IMR-90 (cell line): ENCODE measurements at regions of chr3 and their contacts with region 1.

Region 1: DNA sequence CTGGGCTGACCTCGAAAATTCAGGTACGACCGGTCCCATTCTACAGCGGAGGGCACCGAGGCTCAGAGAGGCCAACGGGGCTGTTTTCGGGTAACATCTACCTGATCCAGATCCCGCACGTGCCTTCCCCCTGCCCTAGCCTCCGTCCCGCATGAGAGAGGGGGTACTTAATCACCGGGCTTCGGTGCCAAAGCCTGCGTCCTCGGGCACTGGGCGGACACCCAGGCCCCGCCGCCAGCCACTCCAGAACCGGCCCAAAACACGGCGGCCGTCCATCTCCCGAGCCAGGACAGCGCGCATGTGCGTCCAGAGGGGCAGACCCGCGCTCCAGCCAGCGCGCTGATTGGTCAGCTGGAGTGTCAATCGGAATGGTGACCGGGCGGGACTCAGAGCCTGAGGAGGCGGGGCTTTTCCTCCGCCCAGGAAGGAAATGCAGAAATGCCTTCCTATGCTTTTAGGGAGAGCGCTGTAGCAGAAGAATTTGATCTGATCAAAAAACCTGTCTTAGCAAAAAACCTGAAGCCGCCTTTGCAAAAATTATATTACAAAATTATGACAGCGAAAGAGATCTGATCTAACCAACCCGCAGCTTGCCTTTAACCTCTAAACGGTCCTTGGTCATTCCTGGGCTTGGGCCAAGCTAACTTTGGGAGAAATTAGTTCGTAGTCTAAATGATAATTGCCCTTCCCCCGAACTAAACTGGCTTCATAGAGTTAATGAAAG is at the start of gene RPUSD3:
- DNase-seq: peak; percentile 93
- ATAC-seq: peak; percentile 99
- H3K4me3 ChIP-seq: peak within 1 kb of the TSS; percentile 71
- H3K27ac ChIP-seq: peak within 1 kb of the TSS; percentile 79
- H3K4me1 ChIP-seq: no peaks in the 10 kb centered on the region
- H3K27me3 ChIP-seq: no peaks in the 10 kb centered on the region
- CTCF ChIP-seq: no peak
- POLR2A ChIP-seq: no peak
- RAD21 ChIP-seq: no peak
- total RNA-seq, gene RPUSD3: 30.3 and 30.8 TPM in 2 replicates

Region 2: DNA sequence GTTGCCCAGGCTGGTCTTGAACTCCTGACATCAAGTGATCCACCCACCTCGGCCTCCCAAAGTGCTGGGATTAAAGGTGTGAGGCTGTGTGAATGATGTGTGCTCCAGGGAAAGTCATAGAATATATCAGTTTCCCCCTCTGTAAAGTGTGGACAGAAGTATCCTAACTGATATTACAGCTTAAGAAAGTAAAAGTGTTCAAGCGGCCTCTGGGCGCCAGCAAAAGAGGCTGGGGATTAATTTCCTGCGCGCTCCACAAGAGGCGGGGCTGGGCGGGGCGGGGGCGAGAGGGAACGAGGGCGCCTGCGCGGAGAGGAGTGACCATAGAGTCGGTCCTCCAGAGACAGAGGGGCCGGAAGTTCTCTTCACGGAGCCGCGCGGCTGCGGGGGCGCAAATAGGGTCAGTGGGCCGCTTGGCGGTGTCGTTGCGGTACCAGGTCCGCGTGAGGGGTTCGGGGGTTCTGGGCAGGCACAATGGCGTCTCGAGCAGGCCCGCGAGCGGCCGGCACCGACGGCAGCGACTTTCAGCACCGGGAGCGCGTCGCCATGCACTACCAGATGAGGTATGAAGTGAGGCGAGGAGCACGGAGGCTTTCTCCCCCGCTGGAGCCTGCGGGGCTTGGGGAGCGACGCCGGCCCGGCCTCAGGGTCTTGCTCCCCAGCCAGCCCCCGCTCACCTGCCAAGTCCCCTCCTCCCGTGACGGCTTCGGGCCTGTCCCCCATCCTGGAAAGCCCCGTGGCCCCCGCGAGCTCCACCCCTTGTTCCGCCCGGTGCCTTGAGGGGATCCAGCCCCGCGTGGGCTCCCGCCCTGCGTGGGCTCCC is 46.6 kb after region 1 on chr3 and contains the start of gene JAGN1:
- CTCF ChIA-PET with region 1: no interaction called
- POLR2A ChIA-PET with region 1: interaction called, 3 read pairs
- dilution Hi-C with region 1: no loop called
- in situ Hi-C with region 1: no loop called
- intact Hi-C with region 1: loop called (anchors 2 kb)
- DNase-seq: peak; percentile 83
- ATAC-seq: peak; percentile 94
- H3K4me3 ChIP-seq: peak within 1 kb of the TSS; percentile 79
- H3K27ac ChIP-seq: peak within 1 kb of the TSS; percentile 97
- H3K4me1 ChIP-seq: peaks cover 2% of the 10 kb centered on the region; the same call in 1 of the 2 replicates
- H3K27me3 ChIP-seq: no peaks in the 10 kb centered on the region
- CTCF ChIP-seq: no peak
- POLR2A ChIP-seq: peak; percentile 85
- RAD21 ChIP-seq: no peak
- total RNA-seq, gene JAGN1: 39.3 and 40.5 TPM in 2 replicates

Region 3: GRCh38 chr3:9915254-9916141 is 71.6 kb after region 1 on chr3:
- CTCF ChIA-PET with region 1: no interaction called
- POLR2A ChIA-PET with region 1: no interaction called
- dilution Hi-C with region 1: no loop called
- in situ Hi-C with region 1: no loop called
- intact Hi-C with region 1: loop called (anchors 2 kb)
- DNase-seq: peak; percentile 52
- ATAC-seq: peak; percentile 62
- H3K4me3 ChIP-seq: peak overlapping the region; percentile 46
- H3K27ac ChIP-seq: peak overlapping the region; percentile 89
- H3K4me1 ChIP-seq: peaks cover 32% of the 10 kb centered on the region
- H3K27me3 ChIP-seq: no peaks in the 10 kb centered on the region
- CTCF ChIP-seq: peak; percentile 53
- POLR2A ChIP-seq: no peak
- RAD21 ChIP-seq: peak; percentile 60

Region 4: GRCh38 chr3:10286596-10287330 is 442.9 kb after region 1 on chr3:
- CTCF ChIA-PET with region 1: no interaction called
- POLR2A ChIA-PET with region 1: no interaction called
- dilution Hi-C with region 1: no loop called
- in situ Hi-C with region 1: no loop called
- intact Hi-C with region 1: loop called (anchors 10 kb)
- DNase-seq: peak; percentile 74
- ATAC-seq: peak; percentile 76
- H3K4me3 ChIP-seq: no peak overlapping the region
- H3K27ac ChIP-seq: no peak overlapping the region
- H3K4me1 ChIP-seq: no peaks in the 10 kb centered on the region
- H3K27me3 ChIP-seq: no peaks in the 10 kb centered on the region
- CTCF ChIP-seq: peak; percentile 57
- POLR2A ChIP-seq: no peak
- RAD21 ChIP-seq: peak; percentile 53